Prostate gland (tissue), 2 donors: ENCODE measurements at regions of chr1 and their contacts with region 1.

Region 1: GRCh38 chr1:209860293-209860881 is 32.6 kb downstream of the UTP25 start:
- DNase-seq: peak; percentile 70
- H3K4me3 ChIP-seq: no peak overlapping the region
- H3K27ac ChIP-seq: no peak overlapping the region
- H3K4me1 ChIP-seq: no peaks in the 10 kb centered on the region
- H3K27me3 ChIP-seq: no peaks in the 10 kb centered on the region
- CTCF ChIP-seq: peak; percentile 47 to 84 (median 64)
- POLR2A ChIP-seq: no peak

Region 2: GRCh38 chr1:208562151-208562960 is 1298.0 kb before region 1 on chr1:
- intact Hi-C with region 1: no loop called
- DNase-seq: no peak
- H3K4me3 ChIP-seq: no peak overlapping the region
- H3K27ac ChIP-seq: no peak overlapping the region
- H3K4me1 ChIP-seq: no peaks in the 10 kb centered on the region
- H3K27me3 ChIP-seq: no peaks in the 10 kb centered on the region
- CTCF ChIP-seq: no peak
- POLR2A ChIP-seq: no peak

Region 3: DNA sequence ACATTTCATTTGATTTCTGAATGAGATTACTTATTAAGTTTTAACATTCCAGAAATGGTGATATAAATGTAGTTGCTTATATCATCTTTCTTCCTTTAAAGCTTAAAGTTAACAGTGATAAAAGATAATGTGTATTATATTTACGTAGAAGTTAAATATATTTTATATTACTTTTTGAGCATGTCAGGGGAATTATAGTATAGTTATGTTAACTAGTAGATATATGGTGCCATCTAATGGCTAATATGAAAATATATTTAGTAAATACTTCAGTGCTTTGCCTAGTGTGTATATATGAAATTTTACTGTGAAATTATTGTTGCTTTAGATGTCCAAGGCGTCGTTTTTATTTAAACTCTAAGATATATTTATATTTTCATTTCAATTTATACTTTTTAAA is 129.1 kb after region 1 on chr1:
- intact Hi-C with region 1: loop called (anchors 10 kb)
- DNase-seq: no peak
- H3K4me3 ChIP-seq: no peak overlapping the region
- H3K27ac ChIP-seq: no peak overlapping the region
- H3K4me1 ChIP-seq: no peaks in the 10 kb centered on the region
- H3K27me3 ChIP-seq: peaks cover 3% of the 10 kb centered on the region
- CTCF ChIP-seq: peak in 2 of 4 experiments; percentile 21 to 29
- POLR2A ChIP-seq: no peak